H1 (cell line): ENCODE measurements at regions of chr10 and their contacts with region 1.

Region 1: DNA sequence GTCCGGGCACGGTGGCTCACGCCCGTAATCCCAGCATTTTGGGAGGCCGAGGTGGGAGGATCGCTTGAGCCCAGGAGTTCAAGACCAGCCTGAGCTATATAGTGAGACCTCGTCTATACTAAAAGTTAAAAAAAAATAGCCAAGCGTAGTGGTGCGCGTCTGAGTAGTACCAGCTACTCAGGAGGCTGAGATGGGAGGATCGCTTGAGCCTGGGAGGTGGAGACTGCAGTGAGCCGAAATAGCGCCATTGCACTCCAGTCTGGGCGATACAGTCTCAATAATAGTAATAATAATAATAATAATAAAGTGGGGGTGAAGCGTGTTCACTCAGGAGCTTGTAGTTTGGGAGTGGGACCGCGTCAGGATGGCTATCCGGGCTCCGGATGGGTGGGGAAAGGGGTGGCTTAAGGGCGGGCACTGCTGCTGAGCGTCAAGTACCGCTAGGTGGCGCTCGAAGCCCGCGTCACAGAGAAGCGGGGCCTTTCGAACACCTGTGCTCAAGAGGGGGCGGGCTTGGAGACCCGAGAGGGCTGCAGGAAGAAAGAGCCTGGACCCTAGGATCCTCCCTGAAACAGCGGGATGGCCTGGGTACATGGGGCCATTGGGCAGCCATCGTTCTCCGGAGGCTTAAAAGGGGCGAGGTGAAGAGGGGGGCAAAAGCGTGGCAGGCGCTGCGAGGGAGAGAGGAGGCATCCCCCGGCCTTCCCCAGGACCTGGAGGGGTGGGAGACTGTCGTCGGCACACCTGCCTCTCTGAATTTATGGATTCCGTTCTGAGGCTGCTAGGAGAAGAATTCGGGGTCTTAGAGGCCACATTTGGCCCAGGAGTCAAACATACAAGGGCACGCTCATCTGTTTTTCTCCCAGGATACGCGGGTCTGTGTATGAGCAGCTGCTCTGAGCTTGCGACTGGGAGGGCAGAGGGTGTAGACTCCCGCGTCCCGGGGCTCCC is 14.5 kb downstream of the LBX1 start:
- DNase-seq: peak in 1 of 2 experiments; percentile 95
- H3K4me3 ChIP-seq: peak overlapping the region in 3 of 4 experiments; percentile 15 to 59 (median 20); a peak in 4 of 8 replicates
- H3K27ac ChIP-seq: no peak overlapping the region
- H3K4me1 ChIP-seq: peaks cover 0 to 17% (median 9%) of the 10 kb centered on the region in 4 experiments; a peak in 5 of 7 replicates
- H3K27me3 ChIP-seq: peaks cover 55 to 77% (median 68%) of the 10 kb centered on the region in 4 experiments
- CTCF ChIP-seq: peak in 2 of 3 experiments; percentile 88 to 96; a peak in 3 of 4 replicates
- EP300 ChIP-seq: no peak
- POLR2A ChIP-seq: no peak
- RAD21 ChIP-seq: peak; percentile 92 to 93

Region 2: DNA sequence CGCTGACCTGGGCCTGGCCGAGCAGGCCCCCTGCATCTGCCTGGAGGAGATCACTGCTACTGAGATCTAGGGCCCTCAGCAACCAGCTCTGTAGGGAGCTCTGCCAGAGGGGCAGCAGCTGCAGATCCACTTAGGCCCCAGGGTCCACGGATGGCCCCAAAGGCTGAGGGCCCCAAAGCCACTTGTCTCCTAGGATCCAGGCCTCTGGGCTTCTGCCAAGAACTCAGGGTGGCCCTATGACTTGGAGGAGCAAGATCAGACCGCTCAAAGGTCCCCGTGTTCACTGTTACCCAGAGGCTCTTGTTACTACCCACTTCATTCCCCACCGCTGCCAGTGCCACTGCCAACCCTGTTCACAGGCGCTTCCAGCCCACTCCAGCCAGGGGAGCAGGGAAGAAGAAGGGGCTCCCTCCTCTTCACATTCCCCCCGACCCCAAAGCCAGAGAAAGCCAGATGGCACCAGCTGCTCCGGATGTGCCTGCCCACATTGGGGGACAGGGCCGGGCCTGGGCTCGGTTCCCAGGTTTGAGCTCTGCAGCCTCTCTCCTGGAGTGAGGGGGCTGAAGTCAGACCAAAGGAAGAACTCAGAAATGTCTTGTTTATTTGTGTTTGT is 207.5 kb before region 1 on chr10:
- CTCF ChIA-PET with region 1: no interaction called
- POLR2A ChIA-PET with region 1: no interaction called
- DNase-seq: no peak
- H3K4me3 ChIP-seq: no peak overlapping the region
- H3K27ac ChIP-seq: no peak overlapping the region
- H3K4me1 ChIP-seq: peaks cover 0 to 12% (median 5%) of the 10 kb centered on the region in 4 experiments; a peak in 5 of 7 replicates
- H3K27me3 ChIP-seq: no peaks in the 10 kb centered on the region
- CTCF ChIP-seq: no peak
- EP300 ChIP-seq: no peak
- POLR2A ChIP-seq: no peak
- RAD21 ChIP-seq: no peak

Region 3: DNA sequence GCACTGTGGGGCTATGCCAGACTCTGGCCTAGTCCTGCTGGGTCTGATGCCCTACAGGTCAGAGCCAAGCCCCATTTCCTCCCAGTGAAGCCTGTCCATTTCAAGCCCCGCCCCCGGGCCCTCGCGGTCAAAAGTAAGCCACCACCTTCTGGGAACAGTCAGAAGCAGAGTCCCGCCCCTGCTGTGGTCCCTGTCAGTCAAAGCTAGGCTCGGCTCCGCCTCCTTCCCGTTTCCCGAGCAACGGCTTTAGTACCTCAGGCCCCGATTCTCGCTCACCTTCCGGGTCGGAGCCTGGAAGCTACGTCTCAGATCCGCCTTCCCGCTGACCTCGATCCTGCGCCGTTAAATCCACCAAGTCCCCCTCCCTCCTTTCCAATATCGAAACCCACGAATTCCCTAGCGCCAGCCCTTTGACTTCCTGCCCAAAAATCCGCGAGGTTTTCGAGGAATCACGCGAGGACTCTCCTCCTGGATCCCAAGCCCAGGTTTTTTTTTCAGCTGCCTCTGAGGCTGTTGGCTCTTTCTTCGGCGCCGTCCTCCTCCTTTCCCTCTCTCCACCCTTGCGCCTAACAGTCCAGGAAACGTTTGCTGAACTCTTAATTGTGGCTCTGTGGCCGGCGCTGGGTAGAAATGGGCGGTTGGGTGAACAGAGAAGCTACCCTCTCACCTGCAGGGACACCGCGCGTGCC is 171.9 kb before region 1 on chr10:
- CTCF ChIA-PET with region 1: interaction called, 14 read pairs
- POLR2A ChIA-PET with region 1: no interaction called
- DNase-seq: peak; percentile 90 to 97
- H3K4me3 ChIP-seq: peak overlapping the region; percentile 65 to 82 (median 73)
- H3K27ac ChIP-seq: no peak overlapping the region
- H3K4me1 ChIP-seq: peaks cover 3 to 24% (median 13%) of the 10 kb centered on the region in 4 experiments
- H3K27me3 ChIP-seq: peaks cover 20 to 42% (median 36%) of the 10 kb centered on the region in 4 experiments
- CTCF ChIP-seq: no peak
- EP300 ChIP-seq: no peak
- POLR2A ChIP-seq: no peak
- RAD21 ChIP-seq: no peak

Region 4: GRCh38 chr10:101071267-101071884 is 143.3 kb before region 1 on chr10:
- CTCF ChIA-PET with region 1: no interaction called
- POLR2A ChIA-PET with region 1: no interaction called
- DNase-seq: no peak
- H3K4me3 ChIP-seq: no peak overlapping the region
- H3K27ac ChIP-seq: no peak overlapping the region
- H3K4me1 ChIP-seq: peaks cover 0 to 15% (median 5%) of the 10 kb centered on the region in 4 experiments; a peak in 6 of 7 replicates
- H3K27me3 ChIP-seq: peaks cover 11 to 55% (median 45%) of the 10 kb centered on the region in 4 experiments
- CTCF ChIP-seq: no peak
- EP300 ChIP-seq: no peak
- POLR2A ChIP-seq: no peak
- RAD21 ChIP-seq: no peak

Region 5: DNA sequence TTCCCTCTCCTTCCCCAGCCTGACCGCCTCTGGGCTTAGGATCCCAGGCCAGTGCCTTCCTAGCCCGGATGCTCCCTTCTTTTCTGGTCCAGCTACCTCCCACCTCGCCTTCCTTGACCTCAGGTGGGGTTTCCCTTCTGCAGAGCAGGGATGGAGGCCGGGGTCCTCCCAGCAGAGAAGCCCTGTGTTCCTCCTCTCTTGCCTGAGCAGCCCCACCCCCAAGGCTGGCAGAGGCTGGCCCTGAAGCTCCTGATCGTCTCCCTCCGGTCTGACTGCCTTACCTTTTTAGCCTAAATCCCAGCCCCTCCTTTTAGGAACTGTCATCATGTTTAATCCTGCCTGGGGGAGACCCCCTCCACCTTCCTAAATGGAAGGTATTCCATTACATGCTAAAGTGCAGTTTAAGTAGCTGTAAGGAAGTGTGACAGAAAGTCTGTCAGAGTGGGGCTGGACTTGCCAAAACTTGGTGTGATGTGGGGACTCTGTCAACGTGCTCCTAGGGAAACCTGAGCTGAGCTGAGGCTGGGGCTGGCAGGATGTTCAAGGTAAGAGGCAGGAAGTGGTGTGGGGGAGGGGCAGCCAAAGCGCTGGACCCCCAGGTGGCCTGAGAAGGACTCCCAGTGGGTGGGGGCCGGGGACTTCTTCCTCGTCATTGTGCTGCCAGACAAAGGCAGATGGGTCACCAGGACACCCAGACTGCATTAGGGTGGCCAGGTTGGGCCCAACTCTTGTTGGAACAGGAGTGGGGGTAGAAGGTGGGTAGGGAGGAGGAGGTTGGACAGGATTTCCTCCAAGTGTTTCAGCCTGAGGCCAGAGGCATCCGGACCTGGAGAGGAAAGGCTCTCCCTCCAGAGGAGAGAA is 24.9 kb before region 1 on chr10:
- CTCF ChIA-PET with region 1: interaction called, 14 read pairs
- POLR2A ChIA-PET with region 1: no interaction called
- DNase-seq: peak; percentile 21 to 64
- H3K4me3 ChIP-seq: peak overlapping the region in 1 of 4 experiments; percentile 5; a peak in 1 of 8 replicates
- H3K27ac ChIP-seq: no peak overlapping the region
- H3K4me1 ChIP-seq: peaks cover 0 to 18% (median 9%) of the 10 kb centered on the region in 4 experiments; a peak in 6 of 7 replicates
- H3K27me3 ChIP-seq: no peaks in the 10 kb centered on the region; a peak in 2 of 7 replicates
- CTCF ChIP-seq: no peak
- EP300 ChIP-seq: no peak
- POLR2A ChIP-seq: no peak
- RAD21 ChIP-seq: no peak

Region 6: DNA sequence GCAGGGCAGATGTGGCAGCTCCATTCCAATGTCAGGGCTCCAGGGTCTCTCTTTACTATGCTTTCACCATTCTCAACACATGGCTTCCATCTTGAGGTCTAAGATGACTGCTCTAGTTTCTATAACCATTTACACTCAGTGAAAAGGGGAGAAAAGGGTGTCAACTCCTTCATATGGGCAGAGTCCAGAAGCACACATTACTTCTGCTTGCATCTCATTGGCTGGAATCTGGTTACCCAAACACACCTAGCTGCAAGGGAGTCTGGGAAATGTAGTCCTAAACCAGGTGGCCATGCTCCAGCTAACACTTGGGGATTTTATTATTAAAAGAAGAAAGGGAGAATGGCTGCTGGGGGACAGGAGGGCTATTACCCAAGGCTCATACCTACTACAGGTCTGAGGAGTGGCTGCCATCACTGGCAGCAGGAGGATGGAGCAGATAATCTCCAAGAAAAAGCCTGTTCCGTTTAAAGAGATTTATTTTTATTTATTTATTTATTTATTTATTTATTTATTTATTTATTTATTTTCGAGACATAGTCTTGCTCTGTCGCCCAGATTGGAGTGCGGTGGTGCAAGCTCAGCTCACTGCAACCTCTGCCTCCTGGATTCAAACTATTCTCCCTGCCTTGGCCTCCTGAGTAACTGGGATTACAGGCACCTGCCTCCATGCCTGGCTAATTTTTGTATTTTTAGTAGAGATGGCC is 43.6 kb after region 1 on chr10:
- CTCF ChIA-PET with region 1: interaction called, 34 read pairs
- POLR2A ChIA-PET with region 1: no interaction called
- DNase-seq: no peak
- H3K4me3 ChIP-seq: no peak overlapping the region
- H3K27ac ChIP-seq: no peak overlapping the region
- H3K4me1 ChIP-seq: peaks cover 2 to 19% (median 10%) of the 10 kb centered on the region in 4 experiments
- H3K27me3 ChIP-seq: peaks cover 0 to 4% (median under 1%) of the 10 kb centered on the region in 4 experiments; a peak in 4 of 7 replicates
- CTCF ChIP-seq: no peak
- EP300 ChIP-seq: no peak
- POLR2A ChIP-seq: no peak
- RAD21 ChIP-seq: no peak

Region 7: GRCh38 chr10:101291331-101292193 is 76.8 kb after region 1 on chr10:
- CTCF ChIA-PET with region 1: interaction called, 266 read pairs
- POLR2A ChIA-PET with region 1: no interaction called
- DNase-seq: peak in 1 of 2 experiments; percentile 86
- H3K4me3 ChIP-seq: peak overlapping the region; percentile 40 to 68 (median 48)
- H3K27ac ChIP-seq: no peak overlapping the region
- H3K4me1 ChIP-seq: peaks cover 15 to 24% (median 17%) of the 10 kb centered on the region in 4 experiments; a peak in 6 of 7 replicates
- H3K27me3 ChIP-seq: peaks cover 47 to 92% (median 82%) of the 10 kb centered on the region in 4 experiments
- CTCF ChIP-seq: peak; percentile 68 to 90 (median 74)
- EP300 ChIP-seq: no peak
- POLR2A ChIP-seq: no peak
- RAD21 ChIP-seq: peak; percentile 67 to 75

Region 8: GRCh38 chr10:101558202-101558601 is 343.5 kb after region 1 on chr10:
- CTCF ChIA-PET with region 1: interaction called, 38 read pairs
- POLR2A ChIA-PET with region 1: no interaction called
- DNase-seq: no peak
- H3K4me3 ChIP-seq: no peak overlapping the region
- H3K27ac ChIP-seq: no peak overlapping the region
- H3K4me1 ChIP-seq: peaks cover 0 to 2% (median 0%) of the 10 kb centered on the region in 4 experiments; a peak in 2 of 7 replicates
- H3K27me3 ChIP-seq: no peaks in the 10 kb centered on the region
- CTCF ChIP-seq: no peak
- EP300 ChIP-seq: no peak
- POLR2A ChIP-seq: no peak
- RAD21 ChIP-seq: no peak

Region 9: GRCh38 chr10:101759309-101760247 is 544.9 kb after region 1 on chr10:
- CTCF ChIA-PET with region 1: no interaction called
- POLR2A ChIA-PET with region 1: no interaction called
- DNase-seq: peak in 1 of 2 experiments; percentile 63
- H3K4me3 ChIP-seq: no peak overlapping the region
- H3K27ac ChIP-seq: no peak overlapping the region
- H3K4me1 ChIP-seq: peaks cover 0 to 9% (median 7%) of the 10 kb centered on the region in 4 experiments; a peak in 6 of 7 replicates
- H3K27me3 ChIP-seq: peaks cover 0 to 5% (median 4%) of the 10 kb centered on the region in 4 experiments; a peak in 3 of 7 replicates
- CTCF ChIP-seq: no peak
- EP300 ChIP-seq: no peak
- POLR2A ChIP-seq: no peak
- RAD21 ChIP-seq: no peak